ENCODE measurements at regions of chr16 and their contacts with region 1.

Region 1: GRCh38 chr16:68131813-68132706 is 46.9 kb downstream of the NFATC3 start:
- DNase-seq: no peak
- H3K4me3 ChIP-seq: no peak overlapping the region
- H3K27ac ChIP-seq: no peak overlapping the region
- H3K4me1 ChIP-seq: peaks cover 0 to 20% (median 9%) of the 10 kb centered on the region in 4 donors
- H3K27me3 ChIP-seq: no peaks in the 10 kb centered on the region
- CTCF ChIP-seq: no peak

Region 2: DNA sequence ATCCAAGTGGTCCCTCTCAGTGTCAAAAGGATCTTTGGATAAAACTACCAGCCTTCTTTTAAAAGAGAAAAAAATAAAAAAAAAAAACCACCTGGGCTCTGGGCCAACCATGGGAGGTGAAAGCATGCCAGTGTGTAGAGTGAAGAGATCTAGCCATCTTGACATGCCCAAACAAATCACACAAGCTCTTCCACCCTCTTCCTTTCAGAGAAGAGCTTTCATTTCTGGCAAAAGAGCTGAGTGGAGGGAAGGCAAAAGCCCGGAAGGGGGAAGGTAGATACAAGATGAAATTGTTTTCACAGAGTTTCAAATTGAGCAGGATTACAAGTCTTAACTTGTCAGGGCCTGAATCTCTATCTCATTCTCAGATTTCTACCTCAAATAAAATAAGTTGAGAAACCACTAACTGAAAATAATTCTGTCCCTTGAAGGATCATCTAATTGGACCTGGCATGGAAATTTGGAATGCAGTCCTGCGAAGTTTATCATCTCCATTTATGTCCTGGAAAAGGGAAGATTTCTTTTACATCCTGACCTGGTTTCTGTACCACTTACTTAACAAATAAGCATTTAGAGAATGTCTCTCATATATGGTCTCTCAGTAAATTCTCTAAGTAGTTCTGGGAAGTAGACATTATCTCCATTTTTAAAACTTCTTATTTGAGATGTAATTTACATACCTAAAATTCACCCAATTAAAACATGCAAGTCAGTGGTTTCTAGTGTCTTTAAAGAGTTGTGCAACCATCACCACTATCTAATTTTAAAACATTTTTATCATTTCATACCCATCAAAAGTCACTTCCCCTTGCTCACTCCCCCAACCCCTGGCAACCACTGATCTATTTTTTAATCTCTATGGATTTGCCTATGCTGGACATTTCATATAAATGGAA is 804.9 kb after region 1 on chr16:
- intact Hi-C with region 1: loop called (anchors 5 kb)
- DNase-seq: no peak
- H3K4me3 ChIP-seq: no peak overlapping the region
- H3K27ac ChIP-seq: no peak overlapping the region
- H3K4me1 ChIP-seq: no peaks in the 10 kb centered on the region
- H3K27me3 ChIP-seq: no peaks in the 10 kb centered on the region
- CTCF ChIP-seq: no peak

Measured in tibial artery (tissue), 4 donors.